ENCODE measurements at regions of chr12 and their contacts with region 1.

Region 1: DNA sequence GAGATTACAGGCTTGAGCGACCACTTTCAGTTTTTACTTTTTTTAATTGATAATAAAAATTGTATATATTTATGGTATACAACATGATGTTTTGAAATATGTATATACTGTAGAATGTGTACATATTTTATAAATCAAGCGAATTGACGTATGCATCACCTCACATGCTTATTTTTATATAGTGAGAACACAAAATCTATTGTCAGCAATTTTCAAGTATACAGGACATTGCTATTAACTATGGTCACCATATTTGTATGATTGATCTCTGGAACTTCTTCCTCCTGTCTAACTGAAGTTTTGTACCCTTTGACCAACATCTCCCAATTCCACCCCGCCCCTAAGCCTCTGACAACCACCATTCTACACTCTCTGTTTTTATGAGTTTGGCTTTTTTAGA is 56.3 kb upstream of the KICS2 start:
- DNase-seq: no peak
- H3K4me3 ChIP-seq: no peak overlapping the region
- H3K4me3 Mint-ChIP-seq: no peak overlapping the region
- H3K27ac ChIP-seq: no peak overlapping the region
- H3K27ac Mint-ChIP-seq: no peak overlapping the region
- H3K4me1 ChIP-seq: no peaks in the 10 kb centered on the region
- H3K4me1 Mint-ChIP-seq: no peaks in the 10 kb centered on the region
- H3K27me3 ChIP-seq: no peaks in the 10 kb centered on the region
- H3K27me3 Mint-ChIP-seq: peaks cover 0 to 4% (median 0%) of the 10 kb centered on the region in 3 donors
- CTCF ChIP-seq: no peak

Region 2: GRCh38 chr12:64392221-64392620 is 113.8 kb after region 1 on chr12:
- intact Hi-C with region 1: loop called in 1 of 2 experiments (anchors 5 kb)
- DNase-seq: peak in 2 of 3 donors; percentile 15 to 17
- H3K4me3 ChIP-seq: no peak overlapping the region
- H3K4me3 Mint-ChIP-seq: peak overlapping the region in 1 of 2 donors; percentile 26
- H3K27ac ChIP-seq: no peak overlapping the region
- H3K27ac Mint-ChIP-seq: no peak overlapping the region
- H3K4me1 ChIP-seq: peaks cover 4 to 10% of the 10 kb centered on the region in 2 donors
- H3K4me1 Mint-ChIP-seq: peaks cover 8% of the 10 kb centered on the region
- H3K27me3 ChIP-seq: peaks cover 22 to 35% of the 10 kb centered on the region in 2 donors
- H3K27me3 Mint-ChIP-seq: peaks cover 24 to 37% (median 35%) of the 10 kb centered on the region in 3 donors
- CTCF ChIP-seq: peak; percentile 38

Measured in CD14-positive monocyte (primary cell).